Natural killer cell (primary cell): ENCODE measurements at regions of chr12 and their contacts with region 1.

Region 1: GRCh38 chr12:21456291-21456780 is 18.9 kb downstream of the PYROXD1 start:
- DNase-seq: peak; percentile 19 to 72
- ATAC-seq: peak; percentile 77 to 90 (median 85)
- H3K4me3 ChIP-seq: no peak overlapping the region
- H3K4me3 Mint-ChIP-seq: peak overlapping the region; percentile 84
- H3K27ac ChIP-seq: peak overlapping the region; percentile 55
- H3K27ac Mint-ChIP-seq: peak overlapping the region; percentile 89
- H3K4me1 ChIP-seq: peaks cover 6% of the 10 kb centered on the region
- H3K4me1 Mint-ChIP-seq: peaks cover 24 to 26% of the 10 kb centered on the region in 2 donors
- H3K27me3 ChIP-seq: no peaks in the 10 kb centered on the region
- H3K27me3 Mint-ChIP-seq: no peaks in the 10 kb centered on the region
- CTCF ChIP-seq: no peak

Region 2: GRCh38 chr12:21501379-21501956 is 45.1 kb after region 1 on chr12 and contains the starts of genes GOLT1B and RECQL:
- intact Hi-C with region 1: loop called (anchors 2 kb)
- DNase-seq: peak; percentile 82 to 98
- ATAC-seq: peak; percentile 95 to 99 (median 98)
- H3K4me3 ChIP-seq: peak within 1 kb of the TSS; percentile 92
- H3K4me3 Mint-ChIP-seq: no peak within 1 kb of the TSS
- H3K27ac ChIP-seq: peak within 1 kb of the TSS; percentile 78
- H3K27ac Mint-ChIP-seq: no peak within 1 kb of the TSS
- H3K4me1 ChIP-seq: peaks cover 17% of the 10 kb centered on the region
- H3K4me1 Mint-ChIP-seq: peaks cover 38 to 42% of the 10 kb centered on the region in 2 donors
- H3K27me3 ChIP-seq: no peaks in the 10 kb centered on the region
- H3K27me3 Mint-ChIP-seq: no peaks in the 10 kb centered on the region
- CTCF ChIP-seq: no peak
- total RNA-seq, gene GOLT1B: 30.9 to 38.0 (median 33.1) TPM
- total RNA-seq, gene RECQL: 39.4 to 46.8 (median 40.1) TPM